ENCODE measurements at regions of chr2 and their contacts with region 1.

Region 1: GRCh38 chr2:88669371-88670214 is 21.9 kb upstream of the RPIA start:
- DNase-seq: peak; percentile 26 to 57
- H3K4me3 ChIP-seq: no peak overlapping the region
- H3K27ac ChIP-seq: no peak overlapping the region
- H3K4me1 ChIP-seq: no peaks in the 10 kb centered on the region
- H3K27me3 ChIP-seq: no peaks in the 10 kb centered on the region
- CTCF ChIP-seq: peak; percentile 81

Region 2: GRCh38 chr2:88590998-88591613 is 78.5 kb before region 1 on chr2:
- CTCF ChIA-PET with region 1: interaction called, 3 read pairs
- POLR2A ChIA-PET with region 1: no interaction called
- intact Hi-C with region 1: loop called (anchors 1 kb)
- DNase-seq: peak; percentile 35 to 44
- H3K4me3 ChIP-seq: no peak overlapping the region
- H3K27ac ChIP-seq: no peak overlapping the region
- H3K4me1 ChIP-seq: no peaks in the 10 kb centered on the region
- H3K27me3 ChIP-seq: no peaks in the 10 kb centered on the region
- CTCF ChIP-seq: peak; percentile 90

Region 3: GRCh38 chr2:88606371-88607030 is 63.1 kb before region 1 on chr2:
- CTCF ChIA-PET with region 1: no interaction called
- POLR2A ChIA-PET with region 1: no interaction called
- intact Hi-C with region 1: no loop called
- DNase-seq: no peak
- H3K4me3 ChIP-seq: no peak overlapping the region
- H3K27ac ChIP-seq: no peak overlapping the region
- H3K4me1 ChIP-seq: peaks cover 25% of the 10 kb centered on the region
- H3K27me3 ChIP-seq: no peaks in the 10 kb centered on the region
- CTCF ChIP-seq: no peak